ENCODE measurements at regions of chr1 and their contacts with region 1.

Region 1: GRCh38 chr1:233744779-233745513 is 131.0 kb downstream of the KCNK1 start:
- DNase-seq: no peak
- H3K4me3 ChIP-seq: no peak overlapping the region
- H3K27ac ChIP-seq: no peak overlapping the region
- H3K4me1 ChIP-seq: no peaks in the 10 kb centered on the region
- H3K27me3 ChIP-seq: no peaks in the 10 kb centered on the region
- CTCF ChIP-seq: no peak
- POLR2A ChIP-seq: no peak

Region 2: GRCh38 chr1:233530665-233531386 is 214.1 kb before region 1 on chr1:
- intact Hi-C with region 1: loop called (anchors 5 kb)
- DNase-seq: no peak
- H3K4me3 ChIP-seq: no peak overlapping the region
- H3K27ac ChIP-seq: no peak overlapping the region
- H3K4me1 ChIP-seq: no peaks in the 10 kb centered on the region
- H3K27me3 ChIP-seq: no peaks in the 10 kb centered on the region
- CTCF ChIP-seq: no peak
- POLR2A ChIP-seq: no peak